ENCODE measurements at regions of chr11 and their contacts with region 1.

Region 1: DNA sequence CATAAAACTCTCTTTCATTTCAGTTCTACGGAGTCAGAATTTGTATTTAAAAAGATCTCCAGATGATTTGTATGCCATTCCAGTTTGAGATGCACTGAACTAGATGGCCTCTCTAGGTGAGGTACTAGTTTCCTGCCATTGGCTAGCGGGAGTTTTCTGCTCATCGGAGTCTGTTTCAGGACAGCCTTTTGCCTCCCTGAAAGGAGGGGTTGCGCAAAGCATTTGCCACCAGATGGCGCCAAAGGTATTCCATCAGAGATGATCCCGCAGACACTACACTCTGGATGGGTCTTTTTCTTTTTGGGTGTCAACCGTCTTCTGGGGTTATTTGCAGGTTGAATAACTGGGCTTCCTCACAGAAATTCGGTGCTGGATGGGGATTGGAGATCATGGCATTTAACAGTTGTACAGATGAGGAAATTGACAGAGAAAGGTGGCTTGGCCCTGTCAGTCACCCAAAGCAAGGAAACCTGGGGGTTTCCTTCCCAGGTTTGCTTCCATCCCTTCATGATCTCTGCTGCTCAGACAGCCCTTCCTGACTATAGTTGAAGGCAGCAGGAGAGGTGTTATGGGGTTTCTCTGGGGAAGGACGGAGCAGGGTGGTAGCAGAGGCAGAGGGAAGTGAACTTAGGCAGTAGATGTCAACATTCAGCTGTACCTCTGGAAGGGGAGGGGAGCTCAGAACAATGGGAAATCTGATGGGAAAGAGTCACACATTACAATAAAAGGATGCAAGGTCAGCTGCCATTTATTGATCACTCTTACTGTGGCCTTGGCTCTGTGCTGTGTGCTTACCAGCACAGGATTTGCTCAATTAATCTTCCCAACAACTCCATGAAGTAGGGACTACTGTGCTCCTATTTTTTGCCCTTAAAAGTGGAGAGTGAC is 81.6 kb downstream of the CCDC81 start:
- DNase-seq: peak; percentile 95
- H3K4me3 ChIP-seq: no peak overlapping the region
- H3K27ac ChIP-seq: no peak overlapping the region
- H3K4me1 ChIP-seq: peaks cover 20% of the 10 kb centered on the region
- H3K27me3 ChIP-seq: no peaks in the 10 kb centered on the region
- CTCF ChIP-seq: peak; percentile 80 to 92 (median 85)
- POLR2A ChIP-seq: no peak

Region 2: GRCh38 chr11:86617502-86617901 is 161.2 kb after region 1 on chr11:
- intact Hi-C with region 1: loop called (anchors 5 kb)
- DNase-seq: no peak
- H3K4me3 ChIP-seq: no peak overlapping the region
- H3K27ac ChIP-seq: no peak overlapping the region
- H3K4me1 ChIP-seq: peaks cover 6% of the 10 kb centered on the region
- H3K27me3 ChIP-seq: no peaks in the 10 kb centered on the region
- CTCF ChIP-seq: no peak
- POLR2A ChIP-seq: no peak

Region 3: DNA sequence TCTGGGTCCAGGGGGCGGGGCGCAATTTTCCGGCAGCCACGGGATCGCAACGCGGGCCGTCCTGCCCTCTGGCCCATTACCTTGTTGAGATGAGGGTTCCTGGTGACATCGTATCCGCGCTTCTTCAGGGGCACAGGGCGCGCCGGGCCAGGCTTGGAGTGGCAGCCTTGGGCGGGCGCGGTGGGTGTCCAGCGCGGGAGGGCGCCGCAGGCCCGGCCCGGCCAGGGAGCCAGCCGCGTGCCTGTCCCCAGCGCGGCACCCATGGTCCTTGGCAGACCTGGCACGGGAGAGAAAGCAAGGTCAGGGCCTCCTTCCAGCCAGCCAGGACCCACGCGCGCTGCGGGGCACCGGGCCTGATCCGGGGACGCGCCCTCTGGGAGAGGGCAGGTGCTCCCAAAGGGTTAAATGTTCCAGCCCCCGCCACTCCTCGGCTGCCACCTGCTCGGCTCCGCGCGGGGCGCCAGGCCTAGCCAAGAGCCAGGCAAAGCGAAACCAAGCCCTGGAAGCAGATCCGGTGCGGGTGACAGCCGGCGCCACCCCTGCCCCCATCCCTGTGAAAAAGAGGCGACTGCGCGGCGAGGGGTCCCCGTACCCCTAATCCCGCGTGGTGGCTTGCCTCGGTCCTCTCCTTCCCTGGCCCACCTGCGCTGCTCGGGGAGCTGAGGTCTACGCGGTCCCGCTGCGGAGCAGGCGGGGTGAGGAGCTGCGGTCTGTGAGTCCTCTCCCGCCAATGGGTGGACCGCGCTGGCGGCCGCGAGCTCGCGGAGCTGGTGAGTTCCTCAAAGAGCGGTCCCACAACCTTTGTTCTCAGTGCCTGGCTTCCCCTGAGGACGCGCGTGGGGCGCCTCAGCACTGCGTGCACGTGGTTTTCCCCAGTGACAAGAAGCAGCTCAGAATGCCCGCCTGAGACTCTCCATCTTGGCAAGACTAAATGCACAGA is 215.7 kb after region 1 on chr11 and contains the start of gene ME3:
- intact Hi-C with region 1: no loop called
- DNase-seq: peak; percentile 86
- H3K4me3 ChIP-seq: peak within 1 kb of the TSS; percentile 72 to 88
- H3K27ac ChIP-seq: peak within 1 kb of the TSS; percentile 94 to 98
- H3K4me1 ChIP-seq: peaks cover 27% of the 10 kb centered on the region
- H3K27me3 ChIP-seq: no peaks in the 10 kb centered on the region
- CTCF ChIP-seq: no peak
- POLR2A ChIP-seq: no peak
- total RNA-seq, gene ME3: 115 to 170 TPM

Region 4: GRCh38 chr11:86818466-86819192 is 362.3 kb after region 1 on chr11:
- intact Hi-C with region 1: loop called (anchors 5 kb)
- DNase-seq: no peak
- H3K4me3 ChIP-seq: no peak overlapping the region
- H3K27ac ChIP-seq: no peak overlapping the region
- H3K4me1 ChIP-seq: no peaks in the 10 kb centered on the region
- H3K27me3 ChIP-seq: no peaks in the 10 kb centered on the region
- CTCF ChIP-seq: peak; percentile 83 to 87 (median 84)
- POLR2A ChIP-seq: no peak

Measured in testis (tissue), 5 donors.